Heart right ventricle (tissue), 16 donors: ENCODE measurements at regions of chr16 and their contacts with region 1.

Region 1: GRCh38 chr16:26345966-26346365 is 654.2 kb downstream of the HS3ST4 start:
- DNase-seq: no peak
- ATAC-seq: peak in 1 of 8 donors; percentile 37
- H3K4me3 ChIP-seq: no peak overlapping the region
- H3K27ac ChIP-seq: no peak overlapping the region
- H3K4me1 ChIP-seq: no peaks in the 10 kb centered on the region
- H3K27me3 ChIP-seq: peaks cover 0 to 7% (median 0%) of the 10 kb centered on the region in 7 donors
- CTCF ChIP-seq: no peak

Region 2: DNA sequence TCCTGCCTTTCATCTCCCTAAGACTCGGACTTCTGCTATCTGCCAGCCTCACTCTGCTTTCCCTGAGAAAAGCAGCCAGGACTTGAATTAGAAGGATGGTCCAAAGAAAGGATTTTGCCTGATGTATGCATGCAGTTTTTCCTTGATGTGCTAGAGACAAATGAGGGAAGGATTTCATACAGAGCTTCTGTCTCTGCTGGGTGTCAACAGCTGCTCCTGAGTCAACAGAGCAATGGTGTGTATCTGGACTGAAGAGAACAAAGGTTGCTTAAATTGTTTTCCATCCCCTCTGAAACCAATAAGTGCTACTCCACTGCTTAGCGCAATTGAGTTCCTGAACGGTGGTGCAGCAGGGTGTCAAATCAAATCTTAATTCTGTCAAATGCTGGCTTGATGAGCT is 40.1 kb after region 1 on chr16:
- intact Hi-C with region 1: no loop called
- DNase-seq: no peak
- ATAC-seq: no peak
- H3K4me3 ChIP-seq: no peak overlapping the region
- H3K27ac ChIP-seq: no peak overlapping the region
- H3K4me1 ChIP-seq: no peaks in the 10 kb centered on the region
- H3K27me3 ChIP-seq: peaks cover 0 to 5% (median 0%) of the 10 kb centered on the region in 7 donors
- CTCF ChIP-seq: no peak

Region 3: GRCh38 chr16:26413780-26414179 is 67.8 kb after region 1 on chr16:
- intact Hi-C with region 1: loop called in 1 of 10 experiments (anchors 10 kb)
- DNase-seq: no peak
- ATAC-seq: no peak
- H3K4me3 ChIP-seq: no peak overlapping the region
- H3K27ac ChIP-seq: no peak overlapping the region
- H3K4me1 ChIP-seq: no peaks in the 10 kb centered on the region
- H3K27me3 ChIP-seq: no peaks in the 10 kb centered on the region
- CTCF ChIP-seq: no peak

Region 4: DNA sequence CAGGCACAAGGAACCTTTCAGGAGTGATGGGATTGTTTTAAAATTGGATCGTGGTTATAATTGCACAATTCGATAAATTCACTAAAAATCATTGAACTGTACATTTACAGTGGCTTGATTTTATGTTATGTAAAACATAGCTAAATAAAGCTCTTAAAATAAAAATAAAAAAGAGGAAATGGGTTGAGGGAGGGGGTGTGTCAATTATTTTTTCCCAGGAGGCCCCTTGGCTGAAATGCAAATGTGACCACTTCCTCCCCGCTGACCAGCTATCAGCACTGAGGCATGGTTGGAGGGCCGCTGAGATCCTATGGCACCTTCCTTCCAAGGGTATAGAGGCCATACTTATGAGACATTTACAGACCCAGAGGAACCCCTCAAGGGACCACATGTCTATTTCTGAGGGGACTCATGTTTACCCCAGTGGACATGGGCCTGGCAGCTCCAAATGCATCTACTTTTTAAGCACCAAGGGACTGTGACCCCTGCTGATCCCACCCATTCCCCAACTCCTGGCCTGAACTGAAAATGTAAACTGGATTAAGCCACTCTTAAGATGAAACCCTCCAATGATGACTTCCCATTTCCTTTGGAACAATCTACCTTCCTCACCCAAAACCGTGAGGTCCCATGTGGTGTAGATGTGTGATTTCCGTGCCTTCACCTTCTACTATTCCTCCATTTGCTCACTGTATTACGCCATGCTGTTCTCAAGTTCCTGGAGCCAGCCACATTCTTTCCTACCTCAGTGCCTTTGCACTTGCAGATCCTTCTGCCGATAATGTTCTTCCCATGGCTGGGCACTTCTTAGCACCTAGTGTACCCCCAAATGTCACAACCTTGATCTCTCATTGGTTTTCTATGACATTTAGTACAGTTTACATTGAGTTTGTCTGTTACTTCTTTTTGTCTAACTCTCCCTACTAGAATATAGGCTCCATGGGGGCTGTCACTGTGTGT is 1053.2 kb after region 1 on chr16:
- intact Hi-C with region 1: loop called in 1 of 10 experiments (anchors 10 kb)
- DNase-seq: no peak
- ATAC-seq: peak in 1 of 8 donors; percentile 34
- H3K4me3 ChIP-seq: no peak overlapping the region
- H3K27ac ChIP-seq: peak overlapping the region in 1 of 10 donors; percentile 8
- H3K4me1 ChIP-seq: peaks cover 4 to 47% (median 12%) of the 10 kb centered on the region in 9 donors
- H3K27me3 ChIP-seq: peaks cover 0 to 25% (median 10%) of the 10 kb centered on the region in 7 donors
- CTCF ChIP-seq: no peak